ENCODE measurements at regions of chr2 and their contacts with region 1.

Region 1: DNA sequence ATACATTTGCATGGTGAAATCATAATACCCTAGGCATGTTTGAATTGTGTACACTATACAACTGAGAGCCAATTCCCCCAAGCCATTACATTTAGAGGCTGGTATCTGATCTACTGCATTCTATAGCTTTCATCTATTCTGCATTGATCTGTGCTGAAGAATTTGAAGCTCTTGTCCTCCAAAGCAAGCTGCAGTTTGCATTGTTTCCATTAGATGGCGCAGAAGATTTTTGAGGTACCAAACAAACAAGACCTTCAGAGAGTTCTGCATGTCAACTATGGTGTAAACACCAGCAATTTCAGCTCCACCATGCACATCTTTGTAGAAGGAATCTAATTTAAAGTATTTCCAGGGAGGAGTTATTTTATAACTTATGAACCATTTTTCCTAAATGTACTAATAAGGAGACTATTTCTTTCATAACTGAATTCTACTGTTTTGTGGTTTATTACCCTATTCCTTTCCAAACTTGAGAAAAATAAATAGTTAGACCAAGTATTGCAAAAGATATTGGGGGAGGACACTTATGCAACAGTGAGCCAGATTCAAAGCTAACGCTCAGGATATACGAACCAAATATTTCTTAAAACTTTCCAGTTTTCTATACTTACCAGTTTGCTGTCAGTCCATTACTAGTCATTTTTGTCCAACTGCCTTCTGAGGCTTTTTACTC is 761.8 kb upstream of the ACVR2A start:
- ATAC-seq: peak in 7 of 8 experiments; percentile 44 to 82 (median 73)
- H3K4me3 ChIP-seq: no peak overlapping the region
- H3K27ac ChIP-seq: no peak overlapping the region
- H3K4me1 ChIP-seq: no peaks in the 10 kb centered on the region

Region 2: DNA sequence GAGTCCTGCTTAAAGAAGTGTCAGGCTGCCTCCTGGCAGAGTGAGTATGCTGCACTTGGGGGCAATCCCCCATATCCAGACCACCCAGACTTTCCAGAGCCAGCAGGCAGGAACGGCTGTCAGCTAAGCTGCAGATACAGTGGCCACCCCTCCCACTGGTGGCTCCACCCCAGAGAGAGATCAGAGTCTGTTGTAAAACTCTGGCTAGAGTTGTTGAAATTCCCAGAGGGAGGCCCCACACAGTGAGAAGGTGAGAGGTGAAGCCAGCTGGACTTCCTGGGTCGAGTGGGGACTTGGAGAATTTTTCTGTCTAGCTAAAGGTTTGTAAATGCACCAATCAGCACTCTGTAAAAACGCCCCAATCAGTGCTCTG is 228.1 kb after region 1 on chr2:
- in situ Hi-C with region 1: loop called in 1 of 9 experiments (anchors 25 kb)
- ATAC-seq: peak in 1 of 8 experiments; percentile 62
- H3K4me3 ChIP-seq: no peak overlapping the region
- H3K27ac ChIP-seq: no peak overlapping the region
- H3K4me1 ChIP-seq: no peaks in the 10 kb centered on the region

Region 3: DNA sequence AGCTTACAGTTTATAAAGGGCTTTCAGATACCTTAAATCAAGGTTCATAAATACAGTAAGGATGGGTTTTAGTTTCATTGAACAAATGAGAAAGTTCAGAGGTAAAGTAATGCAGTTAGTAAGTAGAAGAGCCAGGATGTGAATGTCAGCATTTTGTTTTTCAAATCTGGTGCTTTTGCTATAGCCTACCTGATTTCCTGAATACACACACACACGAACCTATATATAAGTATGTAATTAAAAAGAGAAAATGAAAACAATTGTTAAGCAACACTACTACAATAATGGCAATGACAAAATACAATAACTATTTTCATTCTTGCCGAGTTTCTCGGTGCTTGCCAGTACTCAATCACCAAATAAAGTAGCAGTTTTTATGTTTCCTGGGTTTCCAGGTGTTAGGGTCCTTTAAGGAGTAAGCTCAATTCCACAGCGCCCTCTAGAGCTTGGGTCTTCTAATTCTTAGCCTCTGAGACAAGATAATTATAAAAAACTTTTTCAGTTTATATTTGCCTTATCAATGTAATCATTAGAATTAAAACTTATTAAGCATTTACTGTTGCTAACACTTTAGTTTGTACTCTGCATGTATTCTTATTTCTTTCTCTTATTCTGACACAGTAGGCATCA is 248.9 kb after region 1 on chr2:
- in situ Hi-C with region 1: loop called in 1 of 9 experiments (anchors 25 kb)
- ATAC-seq: peak in 1 of 8 experiments; percentile 18
- H3K4me3 ChIP-seq: no peak overlapping the region
- H3K27ac ChIP-seq: no peak overlapping the region
- H3K4me1 ChIP-seq: no peaks in the 10 kb centered on the region